IMR-90 (cell line): ENCODE measurements at regions of chr10 and their contacts with region 1.

Region 1: GRCh38 chr10:15106352-15107013 is 9.3 kb downstream of the RPP38 start:
- DNase-seq: peak; percentile 67
- ATAC-seq: peak; percentile 98
- H3K4me3 ChIP-seq: no peak overlapping the region
- H3K27ac ChIP-seq: no peak overlapping the region
- H3K4me1 ChIP-seq: no peaks in the 10 kb centered on the region
- H3K27me3 ChIP-seq: no peaks in the 10 kb centered on the region
- CTCF ChIP-seq: peak; percentile 91
- POLR2A ChIP-seq: no peak
- RAD21 ChIP-seq: peak; percentile 88

Region 2: DNA sequence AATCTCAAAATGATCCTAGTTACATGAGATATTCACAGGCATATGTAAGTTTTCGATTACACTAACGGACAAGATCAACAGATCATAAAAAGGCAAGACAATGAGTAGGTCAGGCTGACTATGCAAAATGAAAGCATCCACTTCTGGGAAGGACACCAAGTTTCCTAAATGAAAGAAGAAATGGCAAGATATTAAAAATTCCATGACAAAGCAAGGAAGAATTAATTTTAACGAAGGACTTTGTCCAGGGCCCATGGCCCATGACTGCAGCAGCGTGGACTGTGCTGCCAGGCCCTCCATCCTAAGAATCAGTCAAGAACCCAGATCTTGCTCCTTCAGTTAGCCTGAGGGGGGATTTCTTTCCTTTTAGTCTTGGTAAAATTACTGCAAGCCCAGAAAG is 593.4 kb before region 1 on chr10:
- CTCF ChIA-PET with region 1: no interaction called
- POLR2A ChIA-PET with region 1: no interaction called
- dilution Hi-C with region 1: no loop called
- in situ Hi-C with region 1: no loop called
- intact Hi-C with region 1: loop called (anchors 10 kb)
- DNase-seq: no peak
- ATAC-seq: no peak
- H3K4me3 ChIP-seq: no peak overlapping the region
- H3K27ac ChIP-seq: no peak overlapping the region
- H3K4me1 ChIP-seq: no peaks in the 10 kb centered on the region
- H3K27me3 ChIP-seq: no peaks in the 10 kb centered on the region
- CTCF ChIP-seq: no peak
- POLR2A ChIP-seq: no peak
- RAD21 ChIP-seq: no peak

Region 3: DNA sequence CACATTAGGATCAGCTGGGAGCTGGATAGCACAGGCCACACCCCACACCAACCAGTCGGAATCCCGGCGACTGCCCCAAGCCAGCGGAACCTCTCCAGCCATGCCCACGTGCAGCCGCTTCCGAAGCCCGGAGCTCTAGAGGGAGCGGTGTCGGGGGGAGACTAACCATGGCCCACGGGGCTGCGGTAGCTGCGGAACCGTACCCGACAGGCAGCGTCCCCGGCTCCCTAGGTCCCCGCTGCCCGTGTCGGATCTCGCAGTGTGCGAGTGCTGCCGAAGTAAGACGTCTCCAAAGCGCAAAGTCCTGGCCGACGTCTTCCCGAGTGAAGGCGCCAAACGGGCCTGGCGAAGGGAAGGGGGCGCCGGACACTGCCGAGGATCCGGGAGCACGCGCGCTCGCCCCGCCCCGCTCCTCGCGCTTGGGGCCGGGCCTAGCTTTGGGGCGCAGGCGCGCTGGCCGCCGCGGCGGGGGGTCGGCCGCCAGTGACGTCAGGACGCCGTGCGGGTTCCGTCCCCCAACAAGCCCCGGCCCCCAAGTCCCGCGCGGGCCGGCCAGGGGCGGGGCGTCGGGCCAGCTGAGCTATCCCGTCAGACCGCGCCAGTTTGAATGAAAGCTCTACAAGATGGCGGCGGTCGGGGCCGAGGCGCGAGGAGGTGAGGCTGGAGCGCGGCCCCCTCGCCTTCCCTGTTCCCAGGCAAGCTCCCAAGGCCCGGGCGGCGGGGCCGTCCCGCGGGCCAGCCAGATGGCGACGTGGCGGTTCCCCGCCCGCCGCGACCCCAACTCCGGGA is 228.0 kb before region 1 on chr10 and contains the start of gene SUV39H2:
- CTCF ChIA-PET with region 1: no interaction called
- POLR2A ChIA-PET with region 1: no interaction called
- dilution Hi-C with region 1: no loop called
- in situ Hi-C with region 1: no loop called
- intact Hi-C with region 1: loop called (anchors 10 kb)
- DNase-seq: peak; percentile 91
- ATAC-seq: peak; percentile 93
- H3K4me3 ChIP-seq: peak within 1 kb of the TSS; percentile 91
- H3K27ac ChIP-seq: peak within 1 kb of the TSS; percentile 79
- H3K4me1 ChIP-seq: peaks cover 11% of the 10 kb centered on the region
- H3K27me3 ChIP-seq: no peaks in the 10 kb centered on the region
- CTCF ChIP-seq: 0 out of 2 replicates have a peak, but pooled peaks have one; percentile 1
- POLR2A ChIP-seq: peak; percentile 91
- RAD21 ChIP-seq: 0 out of 2 replicates have a peak, but pooled peaks have one; percentile 0
- total RNA-seq, gene SUV39H2: 14.5 and 23.3 TPM in 2 replicates

Region 4: GRCh38 chr10:14995964-14996565 is 110.4 kb before region 1 on chr10:
- CTCF ChIA-PET with region 1: no interaction called
- POLR2A ChIA-PET with region 1: no interaction called
- dilution Hi-C with region 1: no loop called
- in situ Hi-C with region 1: no loop called
- intact Hi-C with region 1: loop called (anchors 1 kb)
- DNase-seq: no peak
- ATAC-seq: no peak
- H3K4me3 ChIP-seq: peak overlapping the region; percentile 69
- H3K27ac ChIP-seq: no peak overlapping the region
- H3K4me1 ChIP-seq: no peaks in the 10 kb centered on the region
- H3K27me3 ChIP-seq: peaks cover 7% of the 10 kb centered on the region
- CTCF ChIP-seq: no peak
- POLR2A ChIP-seq: no peak
- RAD21 ChIP-seq: no peak